ENCODE measurements at regions of chr18 and their contacts with region 1.

Region 1: GRCh38 chr18:22465859-22466457 is 48.2 kb upstream of the CTAGE1 start:
- DNase-seq: peak; percentile 86
- H3K4me3 ChIP-seq: no peak overlapping the region
- H3K27ac ChIP-seq: peak overlapping the region; percentile 87
- H3K27me3 ChIP-seq: no peaks in the 10 kb centered on the region
- CTCF ChIP-seq: no peak

Region 2: DNA sequence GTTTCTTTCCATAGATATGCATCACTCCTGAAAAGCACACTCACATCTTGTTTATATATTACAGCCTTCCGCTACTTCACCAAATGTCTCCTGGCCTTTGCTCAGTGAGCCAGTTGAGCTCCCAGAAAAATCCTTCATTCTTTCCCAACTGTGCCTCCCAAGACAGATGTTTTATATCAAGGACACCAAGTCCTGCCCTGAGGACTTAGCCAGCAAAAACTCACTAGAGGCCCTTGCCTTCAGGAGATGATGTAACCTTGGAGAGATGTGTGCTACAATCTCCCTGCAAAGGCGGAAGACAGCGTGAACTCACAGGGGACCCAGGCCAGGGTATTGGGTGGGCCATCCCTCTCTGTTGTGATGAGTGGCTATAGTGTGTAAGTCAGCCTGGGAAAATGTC is 37.8 kb after region 1 on chr18:
- CTCF ChIA-PET with region 1: no interaction called
- POLR2A ChIA-PET with region 1: interaction called, 12 read pairs
- DNase-seq: peak; percentile 96
- H3K4me3 ChIP-seq: no peak overlapping the region
- H3K27ac ChIP-seq: peak overlapping the region; percentile 84
- H3K27me3 ChIP-seq: no peaks in the 10 kb centered on the region
- CTCF ChIP-seq: no peak

Measured in AG04450 (cell line).